ENCODE measurements at regions of chr2 and their contacts with region 1.

Region 1: GRCh38 chr2:234425619-234426603 is 71.0 kb downstream of the ARL4C start:
- DNase-seq: peak; percentile 90 to 95 (median 91)
- H3K4me3 ChIP-seq: peak overlapping the region; percentile 19 to 33
- H3K4me3 Mint-ChIP-seq: peak overlapping the region; percentile 70 to 90 (median 82)
- H3K27ac ChIP-seq: peak overlapping the region; percentile 88
- H3K27ac Mint-ChIP-seq: peak overlapping the region; percentile 95 to 100 (median 100)
- H3K4me1 ChIP-seq: peaks cover 100% of the 10 kb centered on the region
- H3K4me1 Mint-ChIP-seq: peaks cover 66 to 96% (median 82%) of the 10 kb centered on the region in 4 donors
- H3K27me3 ChIP-seq: no peaks in the 10 kb centered on the region
- H3K27me3 Mint-ChIP-seq: no peaks in the 10 kb centered on the region

Region 2: GRCh38 chr2:233901367-233901766 is 524.5 kb before region 1 on chr2:
- CTCF ChIA-PET with region 1: no interaction called
- POLR2A ChIA-PET with region 1: no interaction called
- intact Hi-C with region 1: no loop called
- DNase-seq: no peak
- H3K4me3 ChIP-seq: no peak overlapping the region
- H3K4me3 Mint-ChIP-seq: no peak overlapping the region
- H3K27ac ChIP-seq: no peak overlapping the region
- H3K27ac Mint-ChIP-seq: no peak overlapping the region
- H3K4me1 ChIP-seq: peaks cover 13% of the 10 kb centered on the region
- H3K4me1 Mint-ChIP-seq: peaks cover 11 to 15% (median 14%) of the 10 kb centered on the region in 4 donors
- H3K27me3 ChIP-seq: no peaks in the 10 kb centered on the region
- H3K27me3 Mint-ChIP-seq: peaks cover 6 to 10% of the 10 kb centered on the region in 2 donors

Region 3: GRCh38 chr2:233990261-233990798 is 435.6 kb before region 1 on chr2:
- CTCF ChIA-PET with region 1: no interaction called
- POLR2A ChIA-PET with region 1: interaction called, 16 read pairs
- intact Hi-C with region 1: loop called (anchors 10 kb)
- DNase-seq: peak; percentile 82 to 90 (median 87)
- H3K4me3 ChIP-seq: peak overlapping the region in 1 of 2 donors; percentile 16
- H3K4me3 Mint-ChIP-seq: peak overlapping the region in 7 of 8 donors; percentile 57 to 84 (median 64)
- H3K27ac ChIP-seq: peak overlapping the region; percentile 32
- H3K27ac Mint-ChIP-seq: peak overlapping the region; percentile 21 to 96 (median 87)
- H3K4me1 ChIP-seq: peaks cover 65% of the 10 kb centered on the region
- H3K4me1 Mint-ChIP-seq: peaks cover 47 to 70% (median 60%) of the 10 kb centered on the region in 4 donors
- H3K27me3 ChIP-seq: no peaks in the 10 kb centered on the region
- H3K27me3 Mint-ChIP-seq: no peaks in the 10 kb centered on the region

Region 4: DNA sequence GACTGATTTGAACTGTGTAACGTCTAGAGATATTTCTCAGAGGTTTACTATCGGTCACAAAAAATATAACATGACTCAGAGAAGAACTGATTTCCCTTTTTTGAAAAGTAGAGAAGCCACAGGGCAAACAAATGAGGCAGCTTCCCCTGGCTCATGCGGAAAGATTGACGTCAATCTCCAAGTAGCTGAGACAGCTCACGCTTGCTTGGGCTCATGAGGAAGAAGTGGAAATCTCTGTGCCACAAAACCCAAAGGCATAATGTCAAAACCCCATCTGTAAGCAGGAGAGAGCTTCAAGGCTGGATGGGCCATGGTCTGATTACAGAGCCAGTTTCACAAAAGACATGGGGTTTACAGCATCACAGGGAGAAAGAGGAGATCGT is 117.1 kb before region 1 on chr2:
- CTCF ChIA-PET with region 1: interaction called, 3 read pairs
- POLR2A ChIA-PET with region 1: interaction called, 18 read pairs
- intact Hi-C with region 1: loop called (anchors 5 kb)
- DNase-seq: peak; percentile 77 to 92 (median 83)
- H3K4me3 ChIP-seq: no peak overlapping the region
- H3K4me3 Mint-ChIP-seq: peak overlapping the region in 7 of 8 donors; percentile 56 to 91 (median 76)
- H3K27ac ChIP-seq: peak overlapping the region; percentile 56
- H3K27ac Mint-ChIP-seq: peak overlapping the region; percentile 86 to 99 (median 98)
- H3K4me1 ChIP-seq: peaks cover 32% of the 10 kb centered on the region
- H3K4me1 Mint-ChIP-seq: peaks cover 36 to 53% (median 43%) of the 10 kb centered on the region in 4 donors
- H3K27me3 ChIP-seq: no peaks in the 10 kb centered on the region
- H3K27me3 Mint-ChIP-seq: no peaks in the 10 kb centered on the region

Region 5: GRCh38 chr2:234392041-234392615 is 33.8 kb before region 1 on chr2:
- CTCF ChIA-PET with region 1: interaction called, 8 read pairs
- POLR2A ChIA-PET with region 1: interaction called, 12 read pairs
- intact Hi-C with region 1: loop called (anchors 2 kb)
- DNase-seq: no peak
- H3K4me3 ChIP-seq: no peak overlapping the region
- H3K4me3 Mint-ChIP-seq: peak overlapping the region in 6 of 8 donors; percentile 8 to 65 (median 40)
- H3K27ac ChIP-seq: no peak overlapping the region
- H3K27ac Mint-ChIP-seq: peak overlapping the region; percentile 50 to 96 (median 85)
- H3K4me1 ChIP-seq: peaks cover 61% of the 10 kb centered on the region
- H3K4me1 Mint-ChIP-seq: peaks cover 47 to 65% (median 56%) of the 10 kb centered on the region in 4 donors
- H3K27me3 ChIP-seq: no peaks in the 10 kb centered on the region
- H3K27me3 Mint-ChIP-seq: no peaks in the 10 kb centered on the region

Region 6: DNA sequence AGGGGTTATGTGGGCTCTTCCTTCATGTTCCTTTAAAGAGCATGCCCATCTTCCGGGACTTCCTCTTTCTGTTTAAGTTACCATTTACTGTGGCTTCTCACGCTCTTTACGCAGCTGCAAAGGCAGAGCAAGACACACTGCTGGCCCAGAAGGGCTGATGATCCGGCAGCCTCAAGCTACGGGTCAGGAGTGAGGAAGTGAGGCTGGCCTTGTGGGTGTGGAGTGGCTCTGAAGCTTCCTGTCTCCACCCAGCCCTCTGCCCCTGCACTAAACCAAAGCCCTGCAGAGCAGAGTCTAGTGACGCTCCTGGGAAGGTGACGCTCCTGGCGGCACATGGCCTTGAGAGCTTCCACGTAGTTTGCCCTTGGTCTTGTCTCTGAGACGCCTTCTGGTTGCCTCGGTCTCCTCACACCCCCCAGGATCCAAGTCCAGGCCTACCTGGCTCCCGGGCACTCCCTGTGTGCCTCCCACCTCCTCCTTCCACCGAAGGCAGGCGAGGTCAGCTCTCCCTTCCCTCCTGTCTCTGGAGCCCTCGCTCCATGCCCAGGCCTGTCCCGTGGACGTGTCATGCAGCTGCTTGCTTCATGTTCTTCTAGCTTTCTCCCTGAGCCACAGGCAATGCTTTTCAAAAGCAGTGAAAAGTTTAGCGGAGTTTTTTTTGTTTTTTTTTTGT is 20.6 kb after region 1 on chr2:
- CTCF ChIA-PET with region 1: interaction called, 13 read pairs
- POLR2A ChIA-PET with region 1: interaction called, 743 read pairs
- intact Hi-C with region 1: loop called (anchors 1 kb)
- DNase-seq: peak; percentile 87 to 92 (median 90)
- H3K4me3 ChIP-seq: no peak overlapping the region
- H3K4me3 Mint-ChIP-seq: peak overlapping the region; percentile 38 to 90 (median 80)
- H3K27ac ChIP-seq: peak overlapping the region; percentile 84
- H3K27ac Mint-ChIP-seq: peak overlapping the region; percentile 98 to 100 (median 100)
- H3K4me1 ChIP-seq: peaks cover 95% of the 10 kb centered on the region
- H3K4me1 Mint-ChIP-seq: peaks cover 69 to 96% (median 77%) of the 10 kb centered on the region in 4 donors
- H3K27me3 ChIP-seq: no peaks in the 10 kb centered on the region
- H3K27me3 Mint-ChIP-seq: no peaks in the 10 kb centered on the region

Region 7: DNA sequence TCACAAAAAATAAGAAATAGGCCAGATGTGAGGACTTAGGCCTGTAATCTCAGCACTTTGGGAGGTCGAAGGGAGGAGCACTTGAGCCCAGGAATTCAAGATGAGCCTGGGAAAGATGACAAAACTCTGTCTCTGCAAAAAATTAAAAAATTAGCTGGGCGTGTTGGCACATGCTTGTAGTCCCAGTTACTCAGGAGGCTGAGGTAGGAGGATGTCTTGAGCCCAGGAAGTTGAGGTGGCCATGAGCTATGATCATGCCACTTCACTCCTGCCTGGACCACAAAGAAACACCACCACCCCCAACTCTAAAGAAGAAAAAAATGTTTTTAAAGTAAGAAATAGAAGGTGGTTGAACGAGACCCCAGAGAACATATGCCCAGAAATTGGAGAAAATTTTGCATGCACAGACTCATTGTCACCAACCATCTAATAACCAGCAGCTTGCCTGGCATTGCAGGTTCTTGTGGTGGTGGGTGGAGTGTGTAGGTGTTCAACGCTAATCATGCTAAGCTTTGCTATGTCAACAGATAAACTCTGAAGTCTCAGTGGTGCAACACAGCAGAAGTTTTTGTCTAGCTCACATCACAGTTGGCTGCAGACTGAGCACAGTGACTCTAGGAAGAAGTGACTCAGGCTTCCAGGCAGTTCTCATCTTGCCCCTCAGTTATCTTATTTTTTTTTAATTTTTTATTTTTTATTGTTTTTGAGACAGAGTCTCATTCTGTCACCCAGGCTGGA is 52.4 kb after region 1 on chr2:
- CTCF ChIA-PET with region 1: interaction called, 20 read pairs
- POLR2A ChIA-PET with region 1: interaction called, 39 read pairs
- intact Hi-C with region 1: no loop called
- DNase-seq: no peak
- H3K4me3 ChIP-seq: no peak overlapping the region
- H3K4me3 Mint-ChIP-seq: peak overlapping the region in 1 of 8 donors; percentile 24
- H3K27ac ChIP-seq: no peak overlapping the region
- H3K27ac Mint-ChIP-seq: peak overlapping the region in 4 of 7 donors; percentile 17 to 78 (median 74)
- H3K4me1 ChIP-seq: peaks cover 55% of the 10 kb centered on the region
- H3K4me1 Mint-ChIP-seq: peaks cover 36 to 85% (median 67%) of the 10 kb centered on the region in 4 donors
- H3K27me3 ChIP-seq: no peaks in the 10 kb centered on the region
- H3K27me3 Mint-ChIP-seq: no peaks in the 10 kb centered on the region

Region 8: DNA sequence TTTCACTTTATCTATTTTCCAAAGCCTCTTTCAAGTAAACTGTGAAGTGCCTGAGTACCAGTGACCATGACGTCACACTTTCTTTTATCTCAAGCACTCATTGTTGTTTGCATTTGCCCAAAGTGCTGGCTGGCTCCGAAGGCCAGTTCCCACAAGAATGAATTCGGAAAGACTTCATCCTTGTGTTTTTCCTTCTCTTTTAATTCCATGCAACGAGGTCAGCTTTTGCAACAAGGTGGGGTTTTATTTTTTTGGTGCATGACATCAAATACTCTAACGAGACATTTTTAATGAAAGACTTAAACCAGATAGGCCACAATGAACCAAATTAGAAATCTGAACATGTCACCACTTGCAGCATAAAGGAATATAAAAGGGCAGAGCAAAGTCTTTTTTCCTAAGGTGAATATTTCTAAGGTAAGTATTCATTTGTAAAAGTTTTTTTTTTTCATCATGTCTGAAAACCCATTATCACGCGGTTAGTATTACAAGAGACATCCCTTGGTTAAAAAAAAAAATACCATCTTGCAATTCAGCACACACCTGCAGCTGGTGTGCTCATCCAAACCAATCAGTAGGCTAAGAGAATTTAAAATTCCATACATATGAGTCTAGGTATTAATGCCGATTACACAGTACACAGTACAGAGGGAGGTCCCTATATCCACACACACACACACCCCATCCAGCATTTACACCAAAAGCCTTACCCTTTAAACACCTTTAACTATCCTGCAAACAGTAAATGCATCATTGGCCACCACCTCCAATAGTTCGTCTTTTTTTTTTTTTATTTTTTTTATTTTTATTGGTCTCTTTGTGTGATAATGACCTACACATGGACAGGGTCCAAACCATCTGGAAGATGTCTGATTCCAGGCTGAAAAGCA is 68.7 kb after region 1 on chr2:
- CTCF ChIA-PET with region 1: interaction called, 14 read pairs
- POLR2A ChIA-PET with region 1: interaction called, 266 read pairs
- intact Hi-C with region 1: loop called (anchors 1 kb)
- DNase-seq: peak; percentile 60 to 74 (median 65)
- H3K4me3 ChIP-seq: peak overlapping the region; percentile 78 to 97
- H3K4me3 Mint-ChIP-seq: peak overlapping the region; percentile 95 to 100 (median 98)
- H3K27ac ChIP-seq: peak overlapping the region; percentile 98
- H3K27ac Mint-ChIP-seq: peak overlapping the region; percentile 97 to 100 (median 99)
- H3K4me1 ChIP-seq: peaks cover 52% of the 10 kb centered on the region
- H3K4me1 Mint-ChIP-seq: peaks cover 39 to 76% (median 49%) of the 10 kb centered on the region in 4 donors
- H3K27me3 ChIP-seq: no peaks in the 10 kb centered on the region
- H3K27me3 Mint-ChIP-seq: no peaks in the 10 kb centered on the region

Measured in CD4-positive, alpha-beta memory T cell (primary cell).